ENCODE measurements at regions of chr6 and their contacts with region 1.

Region 1: DNA sequence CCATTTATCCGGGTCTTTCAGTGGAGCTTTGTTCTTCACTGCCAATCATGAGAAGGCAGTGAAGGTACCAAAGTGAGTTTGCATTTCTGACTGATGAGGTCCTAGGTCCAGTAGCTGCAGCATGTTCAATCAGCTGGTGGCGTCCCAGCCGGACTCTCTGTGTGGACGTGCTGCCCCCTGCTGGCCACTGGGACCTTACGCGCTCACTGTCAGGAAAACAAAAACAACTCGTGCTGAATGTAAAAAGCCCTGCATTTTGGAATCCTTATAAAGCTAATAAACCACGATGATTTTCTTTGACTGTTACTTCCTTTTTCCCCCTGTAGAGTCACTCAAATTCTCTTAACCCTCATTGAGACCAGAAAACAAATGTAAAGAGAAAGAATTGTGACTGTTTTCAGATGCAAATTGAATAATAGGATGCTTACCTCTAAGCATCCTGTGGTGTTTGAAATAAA is 4.9 kb upstream of the CD24 start:
- DNase-seq: peak; percentile 91
- H3K4me3 ChIP-seq: no peak overlapping the region
- H3K27ac ChIP-seq: no peak overlapping the region
- H3K4me1 ChIP-seq: peaks cover 0 to 23% (median 16%) of the 10 kb centered on the region in 4 donors
- H3K27me3 ChIP-seq: peaks cover 26% of the 10 kb centered on the region
- CTCF ChIP-seq: peak; percentile 87 to 95 (median 93)
- EP300 ChIP-seq: no peak
- POLR2A ChIP-seq: no peak

Region 2: GRCh38 chr6:106325336-106326178 is 653.9 kb before region 1 on chr6 and contains the start of gene ATG5:
- in situ Hi-C with region 1: loop called in 2 of 4 experiments (anchors 25 kb)
- intact Hi-C with region 1: loop called (anchors 10 kb)
- DNase-seq: peak; percentile 100
- H3K4me3 ChIP-seq: peak within 1 kb of the TSS; percentile 50 to 70 (median 66)
- H3K27ac ChIP-seq: peak within 1 kb of the TSS; percentile 89 to 92 (median 90)
- H3K4me1 ChIP-seq: peaks cover 10 to 14% (median 14%) of the 10 kb centered on the region in 4 donors
- H3K27me3 ChIP-seq: no peaks in the 10 kb centered on the region
- CTCF ChIP-seq: no peak
- EP300 ChIP-seq: no peak
- POLR2A ChIP-seq: peak; percentile 96
- total RNA-seq, gene ATG5: 21.7 to 56.4 (median 44.9) TPM

Region 3: GRCh38 chr6:106339334-106340029 is 640.0 kb before region 1 on chr6:
- in situ Hi-C with region 1: loop called (anchors 10 to 25 kb)
- intact Hi-C with region 1: loop called (anchors 10 kb)
- DNase-seq: peak; percentile 49
- H3K4me3 ChIP-seq: no peak overlapping the region
- H3K27ac ChIP-seq: no peak overlapping the region
- H3K4me1 ChIP-seq: peaks cover 0 to 3% (median 1%) of the 10 kb centered on the region in 4 donors
- H3K27me3 ChIP-seq: no peaks in the 10 kb centered on the region
- CTCF ChIP-seq: peak; percentile 60 to 73 (median 70)
- EP300 ChIP-seq: no peak
- POLR2A ChIP-seq: no peak

Region 4: DNA sequence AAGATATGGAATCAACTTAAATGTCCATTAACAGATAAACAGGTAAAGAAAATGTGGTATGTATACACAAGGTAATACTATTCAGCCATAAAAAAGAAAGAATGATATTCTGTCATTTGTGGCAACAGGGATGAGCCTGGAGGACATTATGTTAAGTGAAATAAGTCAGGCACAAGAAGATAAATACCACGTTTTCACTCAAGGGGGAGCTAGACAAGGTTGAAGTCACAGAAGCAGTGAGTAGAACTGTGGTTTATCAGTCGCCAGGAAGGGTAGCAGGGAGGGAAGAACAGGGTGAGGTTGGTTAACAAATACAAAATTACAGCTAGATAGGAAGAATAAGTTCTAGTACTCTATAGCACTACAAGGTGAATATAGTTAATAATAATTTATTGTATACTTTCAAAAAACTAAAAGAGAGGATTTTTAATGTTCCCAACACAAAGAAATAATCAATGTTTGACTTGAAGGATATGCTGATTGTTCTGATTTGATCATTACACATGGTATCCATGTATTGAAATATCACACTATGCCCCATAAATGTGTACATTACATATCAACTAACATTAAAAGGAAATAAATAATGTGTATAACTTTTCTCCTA is 371.3 kb before region 1 on chr6:
- in situ Hi-C with region 1: loop called in 3 of 4 experiments (anchors 10 to 25 kb)
- intact Hi-C with region 1: no loop called
- DNase-seq: peak; percentile 12
- H3K4me3 ChIP-seq: no peak overlapping the region
- H3K27ac ChIP-seq: no peak overlapping the region
- H3K4me1 ChIP-seq: no peaks in the 10 kb centered on the region
- H3K27me3 ChIP-seq: no peaks in the 10 kb centered on the region
- CTCF ChIP-seq: peak; percentile 53 to 87 (median 64)
- EP300 ChIP-seq: no peak
- POLR2A ChIP-seq: no peak

Region 5: DNA sequence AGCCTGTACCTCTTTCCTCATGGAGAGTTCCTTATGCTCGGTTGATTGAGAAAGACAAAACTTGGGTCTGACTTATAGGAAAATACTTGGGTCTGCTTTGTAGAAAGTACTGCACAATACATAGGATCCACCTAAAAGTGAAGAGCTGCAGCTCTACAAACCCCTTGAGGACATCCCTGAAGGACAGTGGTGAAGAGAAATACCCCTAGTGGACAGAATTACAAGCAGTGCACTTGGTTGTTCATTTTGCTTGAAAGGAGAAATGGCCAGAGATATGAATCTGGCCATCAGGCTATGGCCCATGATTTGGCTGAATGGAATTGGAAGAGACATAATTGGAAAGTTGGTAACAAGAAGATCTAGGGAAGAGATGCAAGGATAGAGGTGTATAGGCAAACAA is 13.2 kb before region 1 on chr6:
- in situ Hi-C with region 1: no loop called
- intact Hi-C with region 1: no loop called
- DNase-seq: no peak
- H3K4me3 ChIP-seq: no peak overlapping the region
- H3K27ac ChIP-seq: no peak overlapping the region
- H3K4me1 ChIP-seq: no peaks in the 10 kb centered on the region
- H3K27me3 ChIP-seq: no peaks in the 10 kb centered on the region
- CTCF ChIP-seq: peak in 1 of 5 experiments; percentile 3
- EP300 ChIP-seq: no peak
- POLR2A ChIP-seq: no peak

Region 6: GRCh38 chr6:107670792-107671199 is 691.3 kb after region 1 on chr6:
- in situ Hi-C with region 1: no loop called
- intact Hi-C with region 1: no loop called
- DNase-seq: peak; percentile 41
- H3K4me3 ChIP-seq: no peak overlapping the region
- H3K27ac ChIP-seq: no peak overlapping the region
- H3K4me1 ChIP-seq: peaks cover 0 to 30% (median 5%) of the 10 kb centered on the region in 4 donors
- H3K27me3 ChIP-seq: no peaks in the 10 kb centered on the region
- CTCF ChIP-seq: no peak
- EP300 ChIP-seq: no peak
- POLR2A ChIP-seq: no peak

Measured in transverse colon (tissue), 4 donors.